ENCODE measurements at regions of chr21 and their contacts with region 1.

Region 1: GRCh38 chr21:42164064-42164789 is 54.7 kb upstream of the ABCG1 start:
- DNase-seq: peak; percentile 65 to 82
- ATAC-seq: peak; percentile 74 to 94 (median 91)
- H3K4me3 ChIP-seq: no peak overlapping the region
- H3K27ac ChIP-seq: peak overlapping the region in 2 of 10 donors; percentile 12 to 30
- H3K4me1 ChIP-seq: peaks cover 0 to 15% (median 5%) of the 10 kb centered on the region in 9 donors
- H3K27me3 ChIP-seq: peaks cover 0 to 7% (median 0%) of the 10 kb centered on the region in 7 donors
- CTCF ChIP-seq: peak; percentile 38 to 76 (median 66)

Region 2: DNA sequence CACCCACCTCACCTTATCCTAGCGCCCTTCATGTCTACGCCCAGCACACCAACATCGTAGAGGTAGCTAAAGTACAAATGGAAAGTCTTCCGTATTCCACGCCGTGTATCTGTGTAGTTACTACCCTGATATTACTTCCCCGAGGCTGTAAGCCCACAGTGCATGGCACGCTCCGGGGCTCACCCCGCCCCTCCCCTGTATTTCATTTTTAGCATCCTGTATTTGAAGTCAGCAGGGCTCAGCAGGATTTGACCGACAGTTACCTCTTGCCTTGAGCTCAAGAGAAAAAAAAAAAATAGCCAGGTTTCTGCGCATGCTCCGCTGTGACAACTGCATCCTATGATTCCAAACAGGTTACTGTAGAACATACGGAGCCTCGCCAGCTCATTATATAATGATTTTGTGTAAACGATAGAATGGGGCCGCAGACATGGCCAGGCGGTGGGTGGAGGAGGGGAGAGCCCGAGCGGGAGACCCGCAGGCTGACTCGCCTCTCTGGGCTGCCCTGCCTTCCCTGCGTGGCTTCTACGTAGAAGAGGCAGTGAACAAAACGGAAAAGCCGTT is 56.0 kb after region 1 on chr21:
- intact Hi-C with region 1: loop called in 5 of 10 experiments (anchors 2 to 10 kb)
- DNase-seq: peak; percentile 46 to 77
- ATAC-seq: peak; percentile 56 to 84 (median 82)
- H3K4me3 ChIP-seq: peak overlapping the region; percentile 55 to 90 (median 79)
- H3K27ac ChIP-seq: peak overlapping the region; percentile 70 to 93 (median 83)
- H3K4me1 ChIP-seq: peaks cover 3 to 43% (median 35%) of the 10 kb centered on the region in 9 donors
- H3K27me3 ChIP-seq: peaks cover 0 to 10% (median 0%) of the 10 kb centered on the region in 7 donors
- CTCF ChIP-seq: no peak

Region 3: GRCh38 chr21:42258153-42258884 is 94.1 kb after region 1 on chr21:
- intact Hi-C with region 1: loop called (anchors 1 to 10 kb)
- DNase-seq: peak; percentile 65 to 80
- ATAC-seq: peak in 7 of 8 donors; percentile 42 to 71 (median 59)
- H3K4me3 ChIP-seq: no peak overlapping the region
- H3K27ac ChIP-seq: peak overlapping the region in 1 of 10 donors; percentile 29
- H3K4me1 ChIP-seq: peaks cover 13 to 73% (median 46%) of the 10 kb centered on the region in 9 donors
- H3K27me3 ChIP-seq: no peaks in the 10 kb centered on the region
- CTCF ChIP-seq: peak; percentile 61 to 92 (median 78)

Region 4: DNA sequence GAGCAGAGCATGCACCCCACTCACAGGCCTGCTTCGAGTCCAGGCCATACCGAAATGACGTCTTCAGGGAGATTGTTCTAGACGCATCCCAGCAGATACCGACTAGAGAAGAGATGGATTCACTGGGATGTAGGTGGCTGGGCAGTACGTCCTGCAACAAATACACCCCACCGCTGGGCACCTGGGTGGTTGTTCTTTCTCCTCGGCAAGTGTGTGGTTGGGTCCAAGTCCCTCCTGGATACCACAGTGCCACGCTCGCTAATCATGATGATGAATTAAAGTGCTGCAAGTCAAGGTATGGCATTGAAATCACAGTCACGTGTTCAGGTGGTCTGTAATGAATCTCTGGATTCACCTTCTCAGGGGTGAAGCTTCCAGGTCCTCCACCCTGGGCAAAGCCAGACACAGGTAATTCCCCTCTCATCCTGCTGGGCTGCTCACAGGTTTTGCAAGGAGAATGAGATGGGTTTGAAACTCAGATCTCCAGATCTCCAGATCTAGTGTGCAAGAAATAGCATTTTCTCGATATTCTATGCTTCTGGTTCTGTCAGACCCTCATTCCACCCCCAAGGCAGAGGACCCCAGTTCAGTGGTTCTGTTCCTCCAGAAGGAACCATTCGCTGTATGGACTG is 285.2 kb after region 1 on chr21:
- intact Hi-C with region 1: loop called in 5 of 10 experiments (anchors 1 to 5 kb)
- DNase-seq: no peak
- ATAC-seq: no peak
- H3K4me3 ChIP-seq: no peak overlapping the region
- H3K27ac ChIP-seq: peak overlapping the region in 1 of 10 donors; percentile 37
- H3K4me1 ChIP-seq: peaks cover 0 to 7% (median 4%) of the 10 kb centered on the region in 9 donors
- H3K27me3 ChIP-seq: peaks cover 0 to 20% (median 7%) of the 10 kb centered on the region in 7 donors
- CTCF ChIP-seq: no peak

Region 5: DNA sequence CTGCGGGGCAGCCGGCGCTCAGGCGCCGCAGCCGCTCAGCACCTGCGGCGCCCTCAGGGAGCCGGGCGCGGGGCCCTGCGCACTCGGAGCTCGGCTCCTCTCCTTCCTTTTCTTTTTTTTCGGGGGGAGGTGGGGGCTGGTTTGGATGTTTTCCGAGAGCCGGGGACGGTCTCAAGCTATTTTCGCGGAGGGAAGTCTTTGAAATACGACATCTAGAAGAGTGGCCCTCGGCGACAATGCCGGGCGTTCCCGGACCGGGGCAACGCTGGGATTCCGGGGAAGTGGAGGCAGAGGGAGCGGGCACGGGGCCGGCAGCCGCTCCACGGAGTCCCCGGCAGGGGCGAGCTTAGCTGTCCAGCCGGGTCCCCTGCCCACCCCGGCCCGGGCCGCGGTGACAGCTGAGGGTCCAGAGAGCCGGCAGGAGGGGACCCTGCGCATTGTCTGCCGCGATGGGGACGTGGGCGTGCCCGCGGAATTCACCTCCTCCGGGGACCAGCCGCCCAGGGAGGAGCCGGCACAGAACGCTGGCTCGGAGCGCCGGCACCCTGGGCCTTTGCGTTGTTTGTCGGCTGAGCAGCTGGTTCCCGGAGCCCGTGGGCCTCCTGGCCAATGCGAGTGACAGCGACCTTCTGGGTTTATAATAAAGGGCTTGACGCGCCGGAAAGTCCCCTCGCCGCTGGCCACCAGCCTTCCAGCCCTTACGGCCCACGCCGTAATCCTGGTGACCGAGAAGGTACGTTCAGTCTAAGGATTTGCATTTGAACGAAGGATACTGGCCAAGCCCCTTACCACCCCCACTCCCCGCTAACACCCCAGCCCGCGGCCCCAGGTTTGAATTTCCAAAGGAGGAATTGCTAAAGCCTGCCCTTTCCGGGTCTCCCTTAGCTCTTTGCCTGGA is 350.0 kb after region 1 on chr21:
- intact Hi-C with region 1: loop called in 1 of 10 experiments (anchors 10 kb)
- DNase-seq: peak; percentile 41 to 64
- ATAC-seq: peak; percentile 62 to 86 (median 76)
- H3K4me3 ChIP-seq: peak overlapping the region; percentile 68 to 99 (median 90)
- H3K27ac ChIP-seq: peak overlapping the region; percentile 29 to 86 (median 72)
- H3K4me1 ChIP-seq: peaks cover 0 to 24% (median 15%) of the 10 kb centered on the region in 9 donors
- H3K27me3 ChIP-seq: no peaks in the 10 kb centered on the region
- CTCF ChIP-seq: peak in 1 of 9 donors; percentile 4

Region 6: GRCh38 chr21:42763581-42764442 is 599.6 kb after region 1 on chr21:
- intact Hi-C with region 1: no loop called
- DNase-seq: no peak
- ATAC-seq: no peak
- H3K4me3 ChIP-seq: no peak overlapping the region
- H3K27ac ChIP-seq: no peak overlapping the region
- H3K4me1 ChIP-seq: no peaks in the 10 kb centered on the region
- H3K27me3 ChIP-seq: peaks cover 0 to 6% (median 0%) of the 10 kb centered on the region in 7 donors
- CTCF ChIP-seq: no peak

Measured in heart right ventricle (tissue), 16 donors.